ENCODE measurements at regions of chr17 and their contacts with region 1.

Region 1: GRCh38 chr17:20155258-20156195 is 146.4 kb downstream of the SPECC1 start:
- DNase-seq: peak; percentile 98 to 99 (median 99)
- H3K4me3 ChIP-seq: peak overlapping the region; percentile 49 to 69 (median 60)
- H3K27ac ChIP-seq: peak overlapping the region; percentile 52 to 76
- H3K4me1 ChIP-seq: peaks cover 0 to 3% (median 0%) of the 10 kb centered on the region in 3 donors
- H3K27me3 ChIP-seq: no peaks in the 10 kb centered on the region
- CTCF ChIP-seq: peak; percentile 24

Region 2: DNA sequence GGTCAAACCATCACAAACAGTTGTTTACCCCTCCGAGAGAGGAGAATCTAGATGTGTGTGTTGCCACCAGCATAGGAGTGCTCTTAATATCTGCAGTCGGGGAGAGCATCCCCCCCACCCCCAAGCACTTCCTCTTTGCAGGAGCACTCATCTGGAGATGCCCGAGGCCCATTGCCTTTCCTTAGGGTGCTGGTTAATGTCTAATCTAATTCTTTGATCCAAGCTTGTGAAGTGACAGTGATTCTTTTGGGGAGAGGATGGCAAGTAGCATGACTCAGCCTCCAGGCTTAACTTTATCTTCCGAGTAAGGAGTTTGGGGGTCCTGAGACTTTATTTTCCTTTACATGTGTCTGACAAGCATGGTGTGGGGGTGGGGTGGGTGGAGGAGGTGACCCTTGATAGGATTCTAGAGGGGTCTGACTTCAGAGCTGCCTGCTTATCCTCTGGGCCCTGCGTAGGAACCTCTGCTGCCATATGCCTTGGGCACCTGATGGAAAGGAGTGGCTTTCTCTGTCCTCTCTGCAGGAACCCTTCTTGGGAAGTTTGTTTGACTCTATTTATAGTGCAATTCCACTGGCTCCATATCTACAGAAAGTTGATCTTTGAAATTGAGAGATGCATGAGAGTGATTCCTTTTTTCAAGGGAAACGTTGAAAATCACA is 60.8 kb after region 1 on chr17:
- intact Hi-C with region 1: loop called (anchors 10 kb)
- DNase-seq: peak in 3 of 5 donors; percentile 40 to 51 (median 46)
- H3K4me3 ChIP-seq: no peak overlapping the region
- H3K27ac ChIP-seq: no peak overlapping the region
- H3K4me1 ChIP-seq: no peaks in the 10 kb centered on the region
- H3K27me3 ChIP-seq: no peaks in the 10 kb centered on the region
- CTCF ChIP-seq: no peak

Measured in kidney (tissue), 22 donors.